MCF 10A (cell line): ENCODE measurements at regions of chr2 and their contacts with region 1.

Region 1: GRCh38 chr2:82837588-82838304 is 1621.3 kb downstream of the SUCLG1 start:
- DNase-seq: peak; percentile 88
- H3K4me3 Mint-ChIP-seq: no peak overlapping the region
- H3K27ac Mint-ChIP-seq: peak overlapping the region; percentile 32
- H3K4me1 Mint-ChIP-seq: peaks cover 13% of the 10 kb centered on the region
- H3K27me3 Mint-ChIP-seq: no peaks in the 10 kb centered on the region
- CTCF ChIP-seq: no peak

Region 2: GRCh38 chr2:82795446-82795845 is 42.3 kb before region 1 on chr2:
- CTCF ChIA-PET with region 1: no interaction called
- POLR2A ChIA-PET with region 1: no interaction called
- intact Hi-C with region 1: loop called (anchors 5 kb)
- DNase-seq: peak; percentile 73
- H3K4me3 Mint-ChIP-seq: no peak overlapping the region
- H3K27ac Mint-ChIP-seq: no peak overlapping the region
- H3K4me1 Mint-ChIP-seq: no peaks in the 10 kb centered on the region
- H3K27me3 Mint-ChIP-seq: no peaks in the 10 kb centered on the region
- CTCF ChIP-seq: no peak